ENCODE measurements at regions of chr4 and their contacts with region 1.

Region 1: GRCh38 chr4:99300934-99301333 is 10.1 kb upstream of the ADH1A start:
- DNase-seq: peak; percentile 94
- H3K4me3 Mint-ChIP-seq: no peak overlapping the region
- H3K27ac Mint-ChIP-seq: peak overlapping the region; percentile 84
- H3K4me1 Mint-ChIP-seq: peaks cover 17% of the 10 kb centered on the region
- H3K27me3 Mint-ChIP-seq: no peaks in the 10 kb centered on the region
- CTCF ChIP-seq: no peak

Region 2: DNA sequence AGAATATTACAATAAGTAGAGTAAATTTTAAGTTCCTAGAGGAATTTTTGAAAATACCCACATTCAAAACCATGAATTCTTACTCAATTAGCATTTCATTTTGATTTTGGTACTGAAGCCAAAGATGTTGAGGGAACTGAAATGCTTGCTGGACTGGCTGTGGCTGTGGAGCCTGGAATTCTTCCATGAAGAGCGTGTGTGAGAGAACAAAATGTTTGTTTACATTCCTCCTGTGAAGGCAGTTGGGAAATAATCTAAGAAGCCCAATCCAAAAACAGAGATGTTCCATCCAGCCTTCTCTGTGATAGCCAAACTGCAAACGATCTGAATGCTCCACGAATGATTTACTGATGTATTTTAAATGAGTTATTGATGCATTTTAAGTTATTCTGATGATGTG is 24.0 kb after region 1 on chr4:
- CTCF ChIA-PET with region 1: no interaction called
- POLR2A ChIA-PET with region 1: interaction called, 30 read pairs
- intact Hi-C with region 1: no loop called
- DNase-seq: peak; percentile 82
- H3K4me3 Mint-ChIP-seq: peak overlapping the region; percentile 28
- H3K27ac Mint-ChIP-seq: peak overlapping the region; percentile 96
- H3K4me1 Mint-ChIP-seq: peaks cover 29% of the 10 kb centered on the region
- H3K27me3 Mint-ChIP-seq: no peaks in the 10 kb centered on the region
- CTCF ChIP-seq: no peak